ENCODE measurements at regions of chr5 and their contacts with region 1.

Region 1: GRCh38 chr5:64811050-64811640 is 42.4 kb downstream of the CWC27 start:
- DNase-seq: no peak
- ATAC-seq: peak; percentile 46
- H3K4me3 ChIP-seq: no peak overlapping the region
- H3K27ac ChIP-seq: no peak overlapping the region
- H3K4me1 ChIP-seq: no peaks in the 10 kb centered on the region
- H3K27me3 ChIP-seq: no peaks in the 10 kb centered on the region
- CTCF ChIP-seq: peak; percentile 69

Region 2: DNA sequence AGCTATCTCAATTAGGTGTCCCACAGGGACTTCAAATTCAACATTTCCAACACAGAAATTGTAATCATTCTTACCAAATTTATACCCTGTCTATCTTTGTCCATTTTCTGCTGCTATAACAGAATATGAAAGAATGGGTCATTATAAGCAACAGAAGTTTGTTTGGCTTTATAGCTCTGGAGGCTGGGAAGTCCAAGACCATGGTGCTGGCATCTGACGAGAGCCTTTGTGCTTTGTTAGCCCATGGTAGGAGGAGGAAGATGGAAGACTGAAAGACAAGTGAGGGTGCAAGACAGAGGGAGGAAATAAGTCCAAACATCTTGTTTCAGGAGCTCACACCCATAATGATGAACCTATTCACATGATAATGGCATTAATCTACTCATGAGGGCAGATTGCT is 29.8 kb after region 1 on chr5:
- intact Hi-C with region 1: no loop called
- DNase-seq: no peak
- ATAC-seq: no peak
- H3K4me3 ChIP-seq: no peak overlapping the region
- H3K27ac ChIP-seq: no peak overlapping the region
- H3K4me1 ChIP-seq: peaks cover 4% of the 10 kb centered on the region
- H3K27me3 ChIP-seq: no peaks in the 10 kb centered on the region
- CTCF ChIP-seq: no peak

Region 3: DNA sequence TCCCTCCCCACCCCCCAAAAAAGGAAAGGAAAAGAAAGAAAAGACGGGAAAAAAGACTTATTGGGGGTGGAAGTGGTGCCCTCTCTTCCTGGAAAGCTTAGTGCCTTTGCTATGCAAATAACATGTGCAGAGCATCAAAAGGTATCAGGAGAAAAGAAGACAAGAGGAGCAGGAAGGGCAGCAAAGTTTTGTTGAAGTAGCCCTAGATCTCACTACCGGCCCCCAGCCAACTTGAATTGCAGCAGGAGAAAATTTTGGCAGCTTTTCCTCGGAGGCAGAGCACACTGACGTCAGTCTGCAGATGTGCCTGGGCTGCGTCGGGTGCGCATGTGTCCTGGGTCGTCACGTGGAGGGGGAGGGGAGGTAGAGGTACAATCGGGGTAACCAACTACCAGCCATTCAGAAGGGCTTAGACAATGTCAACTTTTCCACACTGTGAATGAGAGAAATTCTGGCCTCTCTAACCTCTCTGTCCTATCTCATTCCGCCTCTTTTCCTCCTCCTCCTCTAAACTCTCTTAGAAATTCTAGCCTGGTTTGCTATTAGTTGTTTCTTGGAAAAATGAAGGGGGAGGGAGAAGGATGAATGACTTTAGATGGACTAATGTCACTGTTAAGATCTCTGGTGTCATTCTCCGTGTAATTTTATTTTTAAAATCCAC is 670.6 kb after region 1 on chr5 and contains the start of gene ADAMTS6:
- intact Hi-C with region 1: loop called (anchors 10 kb)
- DNase-seq: peak; percentile 87
- ATAC-seq: peak; percentile 95
- H3K4me3 ChIP-seq: peak within 1 kb of the TSS; percentile 73
- H3K27ac ChIP-seq: peak within 1 kb of the TSS; percentile 58
- H3K4me1 ChIP-seq: peaks cover 15% of the 10 kb centered on the region
- H3K27me3 ChIP-seq: no peaks in the 10 kb centered on the region
- CTCF ChIP-seq: no peak
- total RNA-seq, gene ADAMTS6: 2.3 TPM